Panc1 (cell line): ENCODE measurements at regions of chr1 and their contacts with region 1.

Region 1: DNA sequence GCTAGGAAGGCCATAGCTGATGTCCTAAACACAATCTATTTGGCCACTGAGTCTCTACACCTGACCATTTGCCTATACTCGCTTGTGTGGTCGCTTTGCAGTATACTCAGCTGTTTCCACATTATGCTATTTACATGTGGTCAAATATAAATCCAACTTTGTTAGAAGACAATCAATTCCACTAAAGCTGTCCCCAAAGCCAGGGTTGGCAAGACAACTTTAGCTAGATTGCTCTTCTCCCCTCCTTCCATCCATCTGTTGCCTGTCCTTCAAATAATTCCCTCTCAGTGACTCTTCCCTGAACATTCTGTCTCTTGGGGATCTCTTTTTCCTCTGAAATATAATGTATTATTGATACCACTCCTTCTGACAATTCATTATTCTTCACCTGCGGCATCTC is 30.1 kb downstream of the AVPR1B start:
- DNase-seq: no peak
- ATAC-seq: no peak
- H3K4me3 ChIP-seq: no peak overlapping the region
- H3K27ac ChIP-seq: no peak overlapping the region
- H3K4me1 ChIP-seq: no peaks in the 10 kb centered on the region
- H3K27me3 ChIP-seq: peaks cover 10% of the 10 kb centered on the region
- CTCF ChIP-seq: no peak

Region 2: DNA sequence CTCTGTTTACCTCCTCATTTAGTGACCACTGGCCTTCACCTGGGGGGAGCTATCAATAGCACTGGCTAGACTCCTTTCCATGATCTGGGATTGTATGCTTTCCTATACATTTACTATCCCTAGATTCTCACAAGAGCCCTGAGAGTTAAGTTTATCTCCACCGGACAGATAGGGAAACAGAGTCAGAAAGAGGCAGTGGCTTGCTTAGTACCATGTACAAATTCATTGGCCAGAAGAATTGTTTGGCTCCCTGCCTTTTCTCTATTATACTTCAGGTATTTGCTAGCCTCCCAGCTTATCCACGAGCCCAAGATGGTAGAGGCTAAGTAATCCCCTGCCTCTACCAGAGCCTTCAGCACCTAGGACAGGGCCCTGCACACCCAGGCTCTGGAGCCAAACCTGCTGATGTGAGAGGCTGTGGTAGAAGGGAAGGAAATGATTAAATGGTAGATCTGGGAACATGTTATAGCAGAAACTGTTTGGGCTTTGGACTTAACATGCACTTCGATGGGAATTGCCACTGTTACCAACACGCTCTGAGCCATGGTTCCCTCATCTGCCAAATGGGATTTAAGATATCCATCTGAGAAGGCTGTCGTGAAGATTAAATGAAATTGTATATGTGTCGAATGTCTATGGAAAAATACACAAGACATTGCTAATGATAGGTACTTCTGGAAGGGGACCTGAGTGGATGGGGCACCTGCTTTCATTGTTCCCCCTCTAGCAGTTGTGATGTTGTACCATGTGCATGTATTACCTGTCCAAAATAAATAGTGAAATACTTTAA is 628.1 kb before region 1 on chr1:
- CTCF ChIA-PET with region 1: no interaction called
- POLR2A ChIA-PET with region 1: no interaction called
- in situ Hi-C with region 1: no loop called
- intact Hi-C with region 1: no loop called
- DNase-seq: no peak
- ATAC-seq: 0 out of 2 replicates have a peak, but pooled peaks have one; percentile 42
- H3K4me3 ChIP-seq: no peak overlapping the region
- H3K27ac ChIP-seq: no peak overlapping the region
- H3K4me1 ChIP-seq: no peaks in the 10 kb centered on the region
- H3K27me3 ChIP-seq: peaks cover 31% of the 10 kb centered on the region
- CTCF ChIP-seq: no peak

Region 3: GRCh38 chr1:205983925-205984725 is 103.0 kb before region 1 on chr1:
- CTCF ChIA-PET with region 1: no interaction called
- POLR2A ChIA-PET with region 1: no interaction called
- in situ Hi-C with region 1: no loop called
- intact Hi-C with region 1: loop called (anchors 5 kb)
- DNase-seq: peak; percentile 39
- ATAC-seq: peak; percentile 96
- H3K4me3 ChIP-seq: no peak overlapping the region
- H3K27ac ChIP-seq: no peak overlapping the region
- H3K4me1 ChIP-seq: no peaks in the 10 kb centered on the region
- H3K27me3 ChIP-seq: no peaks in the 10 kb centered on the region
- CTCF ChIP-seq: peak; percentile 94

Region 4: DNA sequence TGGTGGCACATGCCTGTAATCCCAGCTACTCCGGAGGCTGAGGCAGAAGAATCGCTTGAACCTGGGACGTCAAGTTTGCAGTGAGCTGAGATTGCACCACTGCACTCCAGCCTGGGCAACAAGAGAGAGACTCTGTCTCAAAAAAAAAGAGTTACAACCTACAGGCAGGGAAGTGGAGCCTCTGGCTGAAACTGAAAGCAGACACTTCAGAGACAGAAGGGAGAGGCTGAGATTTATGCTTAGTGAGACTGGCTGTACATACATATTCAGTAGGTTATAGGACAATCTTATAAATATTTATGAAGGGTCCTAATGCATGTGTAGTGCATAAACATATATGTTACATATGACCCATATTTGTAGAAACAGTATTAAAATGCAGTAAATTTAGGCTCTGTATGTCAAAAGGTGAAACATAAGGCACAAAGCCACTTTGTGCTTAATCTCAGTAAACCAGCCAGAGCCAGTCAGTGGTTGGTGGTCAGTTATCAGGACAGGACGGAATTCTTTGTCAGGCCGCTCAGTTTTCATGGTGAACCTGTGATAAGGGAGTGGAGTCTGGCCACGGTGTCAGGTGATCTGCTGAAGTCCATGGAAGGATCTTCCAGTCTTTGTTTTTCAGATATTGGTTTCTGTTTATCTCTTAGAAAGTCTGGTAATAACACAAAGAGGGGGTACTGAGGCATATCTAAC is 20.5 kb before region 1 on chr1:
- CTCF ChIA-PET with region 1: no interaction called
- POLR2A ChIA-PET with region 1: no interaction called
- in situ Hi-C with region 1: no loop called
- intact Hi-C with region 1: no loop called
- DNase-seq: no peak
- ATAC-seq: no peak
- H3K4me3 ChIP-seq: no peak overlapping the region
- H3K27ac ChIP-seq: no peak overlapping the region
- H3K4me1 ChIP-seq: no peaks in the 10 kb centered on the region
- H3K27me3 ChIP-seq: no peaks in the 10 kb centered on the region; the same call in 1 of the 2 replicates
- CTCF ChIP-seq: no peak